Activated CD4-positive, alpha-beta memory T cell treated with anti-CD3 and anti-CD28 coated beads, Interleukin-2, amount 10 ng/mL, durations not matched to agents 7 days and 5 days (primary cell): ENCODE measurements at regions of chr16 and their contacts with region 1.

Region 1: DNA sequence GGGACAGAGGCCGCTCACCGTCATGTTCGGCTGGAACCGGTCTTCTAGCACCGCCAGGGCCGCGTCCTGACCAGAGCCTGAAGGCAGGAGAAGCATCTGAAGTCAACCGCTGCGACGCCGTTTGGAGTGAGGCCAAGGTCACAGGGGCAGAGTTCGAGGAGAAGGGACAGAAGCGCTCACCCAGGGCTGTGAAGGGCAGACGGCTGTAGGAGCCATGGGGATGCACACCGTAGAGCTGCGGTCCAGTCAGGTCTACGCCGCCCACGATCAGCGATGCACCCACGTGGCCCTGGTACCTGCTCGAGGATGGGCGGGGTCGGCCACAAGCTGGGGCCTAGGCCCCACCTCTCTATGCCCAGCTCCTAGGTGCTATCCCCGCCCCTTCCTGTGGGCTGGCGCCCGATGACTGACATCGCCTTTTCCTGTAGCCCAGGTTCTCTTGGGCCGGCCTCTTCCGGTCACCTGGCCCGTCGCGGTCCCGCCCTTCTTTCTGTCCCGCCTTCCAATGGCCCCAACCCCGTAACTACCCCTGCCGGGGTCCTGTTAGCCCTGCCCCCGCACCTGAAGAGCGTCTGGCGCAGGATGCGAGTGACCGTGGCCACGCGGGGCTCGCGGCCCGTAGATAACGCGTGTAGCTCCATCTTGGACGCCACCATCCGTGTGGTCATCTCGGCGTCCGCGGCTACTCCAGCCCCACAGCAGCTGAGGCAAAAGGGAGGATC is 1.1 kb downstream of the PSMB10 start:
- DNase-seq: peak; percentile 97
- H3K4me3 Mint-ChIP-seq: peak overlapping the region; percentile 100
- H3K27ac Mint-ChIP-seq: peak overlapping the region; percentile 97
- H3K4me1 Mint-ChIP-seq: peaks cover 44% of the 10 kb centered on the region
- H3K27me3 Mint-ChIP-seq: no peaks in the 10 kb centered on the region

Region 2: GRCh38 chr16:67561824-67562525 is 373.6 kb before region 1 on chr16:
- CTCF ChIA-PET with region 1: interaction called, 9 read pairs
- POLR2A ChIA-PET with region 1: interaction called, 11 read pairs
- DNase-seq: peak; percentile 99
- H3K4me3 Mint-ChIP-seq: peak overlapping the region; percentile 86
- H3K27ac Mint-ChIP-seq: peak overlapping the region; percentile 92
- H3K4me1 Mint-ChIP-seq: peaks cover 43% of the 10 kb centered on the region
- H3K27me3 Mint-ChIP-seq: no peaks in the 10 kb centered on the region

Region 3: DNA sequence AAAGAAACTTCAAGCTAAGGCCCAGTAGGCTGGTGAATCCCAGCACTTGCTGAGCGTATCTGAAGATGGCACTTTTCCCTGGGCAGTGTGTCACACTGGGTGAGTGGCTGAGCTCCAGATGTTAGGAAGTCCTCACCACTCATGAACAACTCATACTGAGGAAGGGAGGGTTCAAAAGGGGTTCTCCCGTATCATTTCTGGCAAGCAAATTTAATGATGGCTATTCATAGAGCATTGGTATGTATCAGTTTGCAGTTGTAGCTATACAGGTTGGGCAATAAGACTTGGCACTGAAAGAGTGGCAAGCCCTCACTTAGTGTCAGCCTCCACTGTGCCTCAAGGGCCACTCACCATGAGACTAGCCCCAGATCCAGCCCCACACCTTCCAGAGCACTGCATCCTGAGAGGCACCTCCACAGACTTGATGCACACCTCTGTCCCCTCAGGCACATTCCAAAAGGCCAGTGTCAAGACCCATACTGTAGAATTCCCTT is 227.1 kb before region 1 on chr16:
- CTCF ChIA-PET with region 1: no interaction called
- POLR2A ChIA-PET with region 1: no interaction called
- DNase-seq: no peak
- H3K4me3 Mint-ChIP-seq: no peak overlapping the region
- H3K27ac Mint-ChIP-seq: no peak overlapping the region
- H3K4me1 Mint-ChIP-seq: peaks cover 23% of the 10 kb centered on the region
- H3K27me3 Mint-ChIP-seq: no peaks in the 10 kb centered on the region

Region 4: DNA sequence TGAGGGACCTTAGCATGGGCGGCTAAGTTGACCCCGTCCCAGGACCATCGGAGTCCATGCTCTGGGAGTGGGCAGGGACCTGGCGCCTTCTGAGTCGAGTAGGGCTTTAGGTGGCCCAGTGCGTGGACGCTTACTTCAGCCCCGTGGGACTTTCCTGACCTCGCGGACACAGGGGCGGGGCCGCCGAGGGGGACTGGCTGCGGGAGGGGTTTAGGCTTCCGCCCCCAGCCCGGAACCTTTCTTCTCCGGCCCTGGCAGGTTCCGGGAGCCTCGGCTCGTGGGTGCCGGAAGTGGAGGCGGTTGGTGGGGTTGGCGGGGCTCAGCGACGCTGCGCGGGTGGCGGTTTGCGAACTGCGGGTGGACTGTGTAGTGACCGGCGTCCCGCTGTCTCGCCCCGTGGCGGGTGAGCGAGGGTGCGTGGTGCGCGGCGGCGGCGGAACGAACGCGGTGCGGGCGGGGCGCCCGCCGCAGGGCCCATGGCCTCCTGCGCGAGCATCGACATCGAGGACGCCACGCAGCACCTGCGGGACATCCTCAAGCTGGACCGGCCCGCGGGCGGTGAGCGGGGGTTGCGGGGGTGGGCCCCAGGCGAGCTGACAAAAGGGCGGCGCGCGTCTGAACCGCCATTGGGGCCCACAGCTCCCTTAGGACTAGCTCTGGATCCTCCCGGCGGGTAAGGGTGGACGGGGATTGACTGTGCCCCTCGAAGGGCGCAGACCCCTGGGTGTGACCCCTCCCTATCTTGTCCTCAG is 62.6 kb before region 1 on chr16 and contains the start of gene EDC4:
- CTCF ChIA-PET with region 1: no interaction called
- POLR2A ChIA-PET with region 1: interaction called, 12 read pairs
- DNase-seq: peak; percentile 90
- H3K4me3 Mint-ChIP-seq: peak within 1 kb of the TSS; percentile 91
- H3K27ac Mint-ChIP-seq: peak within 1 kb of the TSS; percentile 88
- H3K4me1 Mint-ChIP-seq: peaks cover 35% of the 10 kb centered on the region
- H3K27me3 Mint-ChIP-seq: no peaks in the 10 kb centered on the region
- total RNA-seq, gene EDC4: 98.4 to 99.3 TPM

Region 5: DNA sequence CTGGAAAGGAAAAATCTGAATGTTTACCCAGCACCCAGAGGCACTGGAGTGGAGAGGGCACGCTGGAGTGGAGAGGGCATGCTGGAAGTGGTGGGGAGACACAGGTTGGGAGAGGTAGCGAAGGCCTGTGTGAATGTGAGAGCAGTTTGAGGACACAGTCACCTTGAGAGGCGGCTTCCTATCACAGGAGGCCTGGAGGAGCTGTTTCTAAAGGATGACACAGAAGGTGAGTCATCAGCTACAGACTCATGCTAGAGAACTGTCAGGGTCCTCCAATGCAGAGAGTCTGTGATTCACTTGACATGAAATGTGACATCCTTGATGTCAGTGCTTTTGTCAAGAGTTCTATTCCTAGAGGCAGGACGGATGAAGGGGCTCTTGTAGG is 17.7 kb before region 1 on chr16:
- CTCF ChIA-PET with region 1: interaction called, 3 read pairs
- POLR2A ChIA-PET with region 1: interaction called, 42 read pairs
- DNase-seq: peak; percentile 47
- H3K4me3 Mint-ChIP-seq: no peak overlapping the region
- H3K27ac Mint-ChIP-seq: peak overlapping the region; percentile 61
- H3K4me1 Mint-ChIP-seq: peaks cover 26% of the 10 kb centered on the region
- H3K27me3 Mint-ChIP-seq: no peaks in the 10 kb centered on the region

Region 6: GRCh38 chr16:67982011-67982696 is 46.6 kb after region 1 on chr16:
- CTCF ChIA-PET with region 1: interaction called, 4 read pairs
- POLR2A ChIA-PET with region 1: interaction called, 28 read pairs
- DNase-seq: no peak
- H3K4me3 Mint-ChIP-seq: no peak overlapping the region
- H3K27ac Mint-ChIP-seq: no peak overlapping the region
- H3K4me1 Mint-ChIP-seq: peaks cover 25% of the 10 kb centered on the region
- H3K27me3 Mint-ChIP-seq: peaks cover 8% of the 10 kb centered on the region

Region 7: GRCh38 chr16:68040507-68041288 is 105.1 kb after region 1 on chr16:
- CTCF ChIA-PET with region 1: interaction called, 15 read pairs
- POLR2A ChIA-PET with region 1: interaction called, 6 read pairs
- DNase-seq: peak; percentile 91
- H3K4me3 Mint-ChIP-seq: no peak overlapping the region
- H3K27ac Mint-ChIP-seq: peak overlapping the region; percentile 74
- H3K4me1 Mint-ChIP-seq: peaks cover 29% of the 10 kb centered on the region
- H3K27me3 Mint-ChIP-seq: no peaks in the 10 kb centered on the region

Region 8: GRCh38 chr16:68085259-68086071 is 149.9 kb after region 1 on chr16 and contains the start of gene NFATC3:
- CTCF ChIA-PET with region 1: interaction called, 6 read pairs
- POLR2A ChIA-PET with region 1: interaction called, 39 read pairs
- DNase-seq: peak; percentile 99
- H3K4me3 Mint-ChIP-seq: peak within 1 kb of the TSS; percentile 88
- H3K27ac Mint-ChIP-seq: peak within 1 kb of the TSS; percentile 95
- H3K4me1 Mint-ChIP-seq: peaks cover 61% of the 10 kb centered on the region
- H3K27me3 Mint-ChIP-seq: no peaks in the 10 kb centered on the region
- total RNA-seq, gene NFATC3: 208 to 209 TPM